MCF 10A (cell line): ENCODE measurements at regions of chr17 and their contacts with region 1.

Region 1: DNA sequence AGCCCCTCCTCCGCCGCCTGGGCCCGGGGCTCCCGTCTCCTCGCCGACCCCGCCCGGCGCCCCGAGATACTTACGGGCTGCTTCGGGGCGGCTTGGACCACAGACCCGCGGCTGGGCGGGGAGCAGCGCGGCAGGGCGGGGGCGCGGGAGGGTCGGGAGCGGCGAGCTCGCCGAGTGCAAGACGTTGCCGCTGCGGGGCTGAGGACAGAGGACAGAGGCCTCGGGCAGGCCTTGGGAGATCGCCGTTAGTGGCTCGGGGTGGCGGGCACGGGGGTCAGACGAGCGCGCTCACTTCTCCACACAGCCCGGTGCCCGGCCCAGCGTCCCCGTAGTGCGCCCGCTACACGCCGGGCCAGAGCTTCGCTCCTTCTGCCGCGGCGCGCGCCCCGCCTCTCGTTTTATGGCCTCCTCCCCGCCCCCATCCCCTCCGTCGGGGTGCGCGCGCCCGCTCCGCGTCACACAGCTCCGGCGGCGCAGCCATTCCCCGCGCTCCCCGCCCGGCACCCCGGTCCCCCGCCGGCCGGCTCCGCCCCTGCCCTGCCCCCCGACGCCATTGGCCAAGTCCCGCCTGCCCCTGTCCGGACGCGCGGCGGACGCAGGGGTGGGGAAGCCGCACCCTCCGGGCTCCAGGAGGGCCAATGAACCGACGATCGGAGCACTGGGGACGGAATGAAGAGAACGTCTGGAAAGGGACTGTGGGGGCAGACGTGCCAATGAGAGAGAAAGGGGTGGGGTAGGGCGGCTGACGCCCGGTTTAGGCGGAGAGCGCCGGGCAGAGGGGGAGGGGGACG is at the start of gene TOB1:
- DNase-seq: peak; percentile 99
- H3K4me3 Mint-ChIP-seq: peak within 1 kb of the TSS; percentile 73
- H3K27ac Mint-ChIP-seq: peak within 1 kb of the TSS; percentile 93
- H3K4me1 Mint-ChIP-seq: peaks cover 20% of the 10 kb centered on the region
- H3K27me3 Mint-ChIP-seq: no peaks in the 10 kb centered on the region
- CTCF ChIP-seq: no peak
- total RNA-seq, gene TOB1: 53.1 and 66.0 TPM in 2 replicates

Region 2: GRCh38 chr17:50807675-50808074 is 58.5 kb before region 1 on chr17:
- CTCF ChIA-PET with region 1: no interaction called
- POLR2A ChIA-PET with region 1: no interaction called
- intact Hi-C with region 1: no loop called
- DNase-seq: no peak
- H3K4me3 Mint-ChIP-seq: no peak overlapping the region
- H3K27ac Mint-ChIP-seq: no peak overlapping the region
- H3K4me1 Mint-ChIP-seq: no peaks in the 10 kb centered on the region
- H3K27me3 Mint-ChIP-seq: no peaks in the 10 kb centered on the region
- CTCF ChIP-seq: no peak

Region 3: GRCh38 chr17:50853015-50853615 is 13.1 kb before region 1 on chr17:
- CTCF ChIA-PET with region 1: interaction called, 71 read pairs
- POLR2A ChIA-PET with region 1: interaction called, 170 read pairs
- intact Hi-C with region 1: no loop called
- DNase-seq: no peak
- H3K4me3 Mint-ChIP-seq: no peak overlapping the region
- H3K27ac Mint-ChIP-seq: peak overlapping the region; percentile 90
- H3K4me1 Mint-ChIP-seq: peaks cover 15% of the 10 kb centered on the region
- H3K27me3 Mint-ChIP-seq: no peaks in the 10 kb centered on the region
- CTCF ChIP-seq: no peak

Region 4: GRCh38 chr17:50904521-50905459 is 38.6 kb after region 1 on chr17:
- CTCF ChIA-PET with region 1: interaction called, 8 read pairs
- POLR2A ChIA-PET with region 1: interaction called, 139 read pairs
- intact Hi-C with region 1: loop called (anchors 1 kb)
- DNase-seq: peak; percentile 34
- H3K4me3 Mint-ChIP-seq: peak overlapping the region; percentile 58
- H3K27ac Mint-ChIP-seq: peak overlapping the region; percentile 95
- H3K4me1 Mint-ChIP-seq: peaks cover 32% of the 10 kb centered on the region
- H3K27me3 Mint-ChIP-seq: no peaks in the 10 kb centered on the region
- CTCF ChIP-seq: no peak

Region 5: DNA sequence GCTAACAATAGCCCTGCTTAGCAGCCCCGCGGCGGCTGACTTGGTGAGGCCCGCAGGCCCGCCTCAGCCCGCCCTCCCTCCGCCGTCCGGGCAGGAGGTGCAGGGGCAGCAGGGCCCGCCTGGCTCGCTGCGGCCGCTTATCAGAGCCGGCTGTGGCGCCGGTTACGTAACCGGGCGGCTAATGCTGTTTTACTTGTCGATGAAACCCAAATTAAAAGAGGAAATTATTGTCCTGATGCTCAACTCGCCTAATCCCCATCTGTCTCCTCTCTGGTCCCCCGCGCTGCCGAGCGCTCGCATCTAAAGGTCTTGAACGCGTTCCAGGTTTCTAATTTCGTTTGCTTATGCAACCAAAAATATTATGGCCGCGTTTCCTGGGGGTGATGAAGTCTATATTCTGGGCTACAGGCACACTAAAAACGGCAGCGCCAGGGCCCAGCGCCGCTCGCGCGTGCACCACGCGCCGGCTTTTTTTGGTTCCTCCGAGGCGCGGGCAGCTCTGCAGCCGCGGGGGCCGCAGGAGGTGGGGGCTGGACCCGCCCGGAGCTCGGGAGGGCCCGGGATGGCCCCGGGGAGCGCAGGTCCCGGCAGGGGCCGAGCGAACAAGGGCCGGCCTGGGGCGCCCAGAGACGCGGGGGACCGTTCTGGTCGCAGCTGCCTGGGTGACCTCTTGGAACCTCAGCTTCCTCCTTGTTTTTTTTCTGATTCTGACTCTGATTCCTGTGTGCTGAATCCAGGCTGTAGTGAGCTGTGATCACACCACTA is 65.1 kb after region 1 on chr17:
- CTCF ChIA-PET with region 1: interaction called, 4 read pairs
- POLR2A ChIA-PET with region 1: interaction called, 171 read pairs
- intact Hi-C with region 1: loop called (anchors 1 kb)
- DNase-seq: peak; percentile 78
- H3K4me3 Mint-ChIP-seq: peak overlapping the region; percentile 71
- H3K27ac Mint-ChIP-seq: peak overlapping the region; percentile 32
- H3K4me1 Mint-ChIP-seq: peaks cover 45% of the 10 kb centered on the region
- H3K27me3 Mint-ChIP-seq: no peaks in the 10 kb centered on the region
- CTCF ChIP-seq: no peak

Region 6: DNA sequence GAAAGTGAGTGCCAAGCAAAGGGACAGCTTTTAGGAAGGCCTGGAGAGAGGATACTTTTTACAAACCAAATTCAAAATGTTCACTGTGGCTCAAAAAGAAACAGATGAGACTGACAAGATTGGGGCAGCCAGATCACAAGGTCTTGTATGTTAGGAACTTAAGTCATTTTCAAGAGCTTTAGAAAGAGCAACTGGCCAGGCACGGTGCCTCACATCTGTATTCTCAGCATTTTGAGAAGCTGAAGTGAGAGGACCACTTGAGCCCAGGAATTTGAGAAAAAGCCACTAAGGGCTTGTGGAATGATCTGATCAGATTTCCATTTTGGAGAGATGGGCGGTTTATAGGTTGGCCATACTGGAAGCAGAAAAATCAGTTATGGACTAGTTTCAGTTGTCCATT is 237.3 kb after region 1 on chr17:
- CTCF ChIA-PET with region 1: no interaction called
- POLR2A ChIA-PET with region 1: no interaction called
- intact Hi-C with region 1: no loop called
- DNase-seq: no peak
- H3K4me3 Mint-ChIP-seq: no peak overlapping the region
- H3K27ac Mint-ChIP-seq: no peak overlapping the region
- H3K4me1 Mint-ChIP-seq: no peaks in the 10 kb centered on the region
- H3K27me3 Mint-ChIP-seq: no peaks in the 10 kb centered on the region
- CTCF ChIP-seq: no peak

Region 7: GRCh38 chr17:51120739-51121617 is 254.8 kb after region 1 on chr17 and contains the start of gene SPAG9:
- CTCF ChIA-PET with region 1: no interaction called
- POLR2A ChIA-PET with region 1: interaction called, 37 read pairs
- intact Hi-C with region 1: no loop called
- DNase-seq: peak; percentile 96
- H3K4me3 Mint-ChIP-seq: peak within 1 kb of the TSS; percentile 96
- H3K27ac Mint-ChIP-seq: peak within 1 kb of the TSS; percentile 100
- H3K4me1 Mint-ChIP-seq: peaks cover 30% of the 10 kb centered on the region
- H3K27me3 Mint-ChIP-seq: no peaks in the 10 kb centered on the region
- CTCF ChIP-seq: no peak
- total RNA-seq, gene SPAG9: 78.5 and 93.9 TPM in 2 replicates